Activated B cell treated with CpG ODN at 0.5 μM for 24 hours (primary cell): ENCODE measurements at regions of chrX and their contacts with region 1.

Region 1: DNA sequence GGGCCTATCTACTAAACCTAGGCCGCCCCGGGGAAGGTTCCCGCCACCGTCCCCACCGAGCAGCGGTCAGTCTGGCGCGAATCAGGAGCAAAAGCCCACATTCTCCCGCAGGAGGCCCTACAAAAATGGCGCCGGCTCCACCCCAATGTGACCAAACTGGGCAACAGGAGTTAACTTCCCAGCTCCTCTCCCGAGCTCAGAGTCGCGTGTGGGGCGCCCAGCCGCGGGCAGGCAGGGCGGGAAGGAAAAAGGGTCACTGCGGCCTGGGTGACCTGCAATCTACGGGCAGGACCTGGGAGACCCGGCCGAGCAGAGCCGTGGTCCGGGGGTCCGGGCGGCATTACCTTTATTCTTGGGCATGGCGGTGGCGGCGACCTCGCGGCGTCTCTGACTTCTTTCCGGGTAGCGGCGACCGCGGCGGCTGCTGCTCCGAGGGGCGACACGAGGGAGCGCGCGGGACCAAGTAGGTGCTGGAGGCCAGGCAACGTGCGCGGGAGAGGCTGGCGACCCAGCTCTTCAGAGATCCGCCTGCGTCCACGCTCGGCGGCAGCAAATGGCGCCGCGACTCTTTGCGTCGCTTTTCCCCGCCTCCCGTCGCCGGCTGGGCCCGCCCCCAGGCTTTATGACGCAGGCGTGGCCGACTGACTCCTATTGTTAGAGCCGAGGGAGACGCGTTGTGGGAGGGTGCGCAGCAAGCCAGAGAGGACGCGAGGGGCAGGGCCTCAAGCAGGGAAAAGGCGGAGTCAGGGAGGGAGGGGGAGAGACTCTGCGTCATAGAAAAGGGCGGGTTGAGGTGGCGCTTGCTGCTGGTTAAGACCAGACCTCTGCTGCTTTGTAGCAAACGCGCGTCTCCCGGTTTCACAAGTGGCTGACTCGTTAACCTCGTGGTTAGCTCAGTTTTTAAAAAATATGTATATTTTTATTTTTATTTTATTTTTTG is at the start of gene EIF1AX:
- DNase-seq: peak; percentile 88
- ATAC-seq: peak; percentile 99
- H3K4me3 Mint-ChIP-seq: peak within 1 kb of the TSS; percentile 88
- H3K27ac Mint-ChIP-seq: peak within 1 kb of the TSS; percentile 83
- H3K4me1 Mint-ChIP-seq: peaks cover 23% of the 10 kb centered on the region
- H3K27me3 Mint-ChIP-seq: no peaks in the 10 kb centered on the region
- CTCF ChIP-seq: no peak
- total RNA-seq, gene EIF1AX: 58.8 and 59.4 TPM in 2 replicates

Region 2: GRCh38 chrX:19990556-19991349 is 150.8 kb before region 1 on chrX and contains the start of gene BCLAF3:
- CTCF ChIA-PET with region 1: no interaction called
- POLR2A ChIA-PET with region 1: no interaction called
- intact Hi-C with region 1: loop called (anchors 2 kb)
- DNase-seq: peak; percentile 83
- ATAC-seq: peak; percentile 92
- H3K4me3 Mint-ChIP-seq: peak within 1 kb of the TSS; percentile 86
- H3K27ac Mint-ChIP-seq: peak within 1 kb of the TSS; percentile 85
- H3K4me1 Mint-ChIP-seq: peaks cover 16% of the 10 kb centered on the region
- H3K27me3 Mint-ChIP-seq: no peaks in the 10 kb centered on the region
- CTCF ChIP-seq: no peak
- total RNA-seq, gene BCLAF3: 11.6 and 15.3 TPM in 2 replicates

Region 3: GRCh38 chrX:20060961-20061748 is 80.4 kb before region 1 on chrX:
- CTCF ChIA-PET with region 1: no interaction called
- POLR2A ChIA-PET with region 1: no interaction called
- intact Hi-C with region 1: loop called (anchors 2 kb)
- DNase-seq: peak; percentile 59
- ATAC-seq: peak; percentile 94
- H3K4me3 Mint-ChIP-seq: peak overlapping the region; percentile 41
- H3K27ac Mint-ChIP-seq: peak overlapping the region; percentile 89
- H3K4me1 Mint-ChIP-seq: peaks cover 32% of the 10 kb centered on the region
- H3K27me3 Mint-ChIP-seq: no peaks in the 10 kb centered on the region
- CTCF ChIP-seq: no peak

Region 4: GRCh38 chrX:20128670-20129069 is 12.9 kb before region 1 on chrX:
- CTCF ChIA-PET with region 1: no interaction called
- POLR2A ChIA-PET with region 1: interaction called, 15 read pairs
- intact Hi-C with region 1: no loop called
- DNase-seq: no peak
- ATAC-seq: no peak
- H3K4me3 Mint-ChIP-seq: no peak overlapping the region
- H3K27ac Mint-ChIP-seq: no peak overlapping the region
- H3K4me1 Mint-ChIP-seq: no peaks in the 10 kb centered on the region
- H3K27me3 Mint-ChIP-seq: no peaks in the 10 kb centered on the region
- CTCF ChIP-seq: no peak

Region 5: DNA sequence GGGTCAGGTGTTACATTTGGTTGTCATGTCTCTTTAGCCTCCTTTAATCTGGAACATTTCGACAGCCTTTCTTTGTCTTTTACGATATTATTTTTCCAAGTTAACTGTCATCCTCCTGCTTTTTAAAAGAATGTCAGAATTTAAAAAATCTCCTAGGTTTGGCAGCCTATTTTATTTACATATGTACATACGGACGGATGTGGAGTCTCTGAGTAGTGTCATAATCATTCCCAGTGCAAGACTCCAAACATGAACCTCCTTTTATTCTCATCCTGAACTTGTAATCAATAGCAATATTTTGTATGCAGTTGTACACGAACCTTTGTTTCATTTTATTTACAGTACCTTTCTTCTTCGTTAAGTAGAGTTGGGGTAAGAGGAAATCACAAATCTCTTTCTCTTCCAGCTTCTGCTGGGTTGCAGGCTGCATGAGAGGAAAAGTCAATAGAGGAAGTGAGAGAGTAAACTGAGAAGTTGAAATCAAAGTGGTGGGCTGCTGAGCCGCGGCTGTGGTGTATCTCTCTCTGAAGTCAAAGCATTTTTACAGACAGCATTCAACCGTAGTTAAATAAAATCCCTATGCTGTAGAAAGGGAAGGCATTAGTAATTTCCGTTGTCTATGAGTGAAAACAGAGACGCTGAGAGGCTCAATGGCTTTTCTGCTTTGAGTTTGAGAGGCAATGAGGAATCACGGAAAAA is 179.1 kb after region 1 on chrX:
- CTCF ChIA-PET with region 1: no interaction called
- POLR2A ChIA-PET with region 1: no interaction called
- intact Hi-C with region 1: loop called (anchors 5 kb)
- DNase-seq: peak; percentile 16
- ATAC-seq: peak; percentile 92
- H3K4me3 Mint-ChIP-seq: peak overlapping the region; percentile 54
- H3K27ac Mint-ChIP-seq: peak overlapping the region; percentile 82
- H3K4me1 Mint-ChIP-seq: peaks cover 40% of the 10 kb centered on the region
- H3K27me3 Mint-ChIP-seq: no peaks in the 10 kb centered on the region
- CTCF ChIP-seq: no peak